Mammary epithelial cell (primary cell): ENCODE measurements at regions of chr15 and their contacts with region 1.

Region 1: GRCh38 chr15:60374628-60375081 is 23.1 kb downstream of the ANXA2 start:
- DNase-seq: peak; percentile 96
- H3K4me3 ChIP-seq: no peak overlapping the region
- H3K27ac ChIP-seq: peak overlapping the region; percentile 96
- H3K4me1 ChIP-seq: peaks cover 91% of the 10 kb centered on the region
- H3K27me3 ChIP-seq: no peaks in the 10 kb centered on the region
- CTCF ChIP-seq: no peak

Region 2: GRCh38 chr15:60184579-60184978 is 190.1 kb before region 1 on chr15:
- CTCF ChIA-PET with region 1: no interaction called
- dilution Hi-C with region 1: no loop called
- in situ Hi-C with region 1: no loop called
- intact Hi-C with region 1: no loop called
- DNase-seq: peak; percentile 27
- H3K4me3 ChIP-seq: no peak overlapping the region
- H3K27ac ChIP-seq: no peak overlapping the region
- H3K4me1 ChIP-seq: peaks cover 6% of the 10 kb centered on the region
- H3K27me3 ChIP-seq: no peaks in the 10 kb centered on the region
- CTCF ChIP-seq: no peak

Region 3: GRCh38 chr15:60469893-60470641 is 95.4 kb after region 1 on chr15:
- CTCF ChIA-PET with region 1: no interaction called
- dilution Hi-C with region 1: no loop called
- in situ Hi-C with region 1: loop called in 1 of 2 experiments (anchors 25 kb)
- intact Hi-C with region 1: no loop called
- DNase-seq: peak; percentile 31
- H3K4me3 ChIP-seq: no peak overlapping the region
- H3K27ac ChIP-seq: peak overlapping the region; percentile 36
- H3K4me1 ChIP-seq: peaks cover 5% of the 10 kb centered on the region
- H3K27me3 ChIP-seq: no peaks in the 10 kb centered on the region
- CTCF ChIP-seq: no peak